Activated CD8-positive, alpha-beta T cell treated with anti-CD3 and anti-CD28 coated beads, Interleukin-2, amount 10 ng/mL, durations not matched to agents 7 days and 5 days (primary cell): ENCODE measurements at regions of chr22 and their contacts with region 1.

Region 1: DNA sequence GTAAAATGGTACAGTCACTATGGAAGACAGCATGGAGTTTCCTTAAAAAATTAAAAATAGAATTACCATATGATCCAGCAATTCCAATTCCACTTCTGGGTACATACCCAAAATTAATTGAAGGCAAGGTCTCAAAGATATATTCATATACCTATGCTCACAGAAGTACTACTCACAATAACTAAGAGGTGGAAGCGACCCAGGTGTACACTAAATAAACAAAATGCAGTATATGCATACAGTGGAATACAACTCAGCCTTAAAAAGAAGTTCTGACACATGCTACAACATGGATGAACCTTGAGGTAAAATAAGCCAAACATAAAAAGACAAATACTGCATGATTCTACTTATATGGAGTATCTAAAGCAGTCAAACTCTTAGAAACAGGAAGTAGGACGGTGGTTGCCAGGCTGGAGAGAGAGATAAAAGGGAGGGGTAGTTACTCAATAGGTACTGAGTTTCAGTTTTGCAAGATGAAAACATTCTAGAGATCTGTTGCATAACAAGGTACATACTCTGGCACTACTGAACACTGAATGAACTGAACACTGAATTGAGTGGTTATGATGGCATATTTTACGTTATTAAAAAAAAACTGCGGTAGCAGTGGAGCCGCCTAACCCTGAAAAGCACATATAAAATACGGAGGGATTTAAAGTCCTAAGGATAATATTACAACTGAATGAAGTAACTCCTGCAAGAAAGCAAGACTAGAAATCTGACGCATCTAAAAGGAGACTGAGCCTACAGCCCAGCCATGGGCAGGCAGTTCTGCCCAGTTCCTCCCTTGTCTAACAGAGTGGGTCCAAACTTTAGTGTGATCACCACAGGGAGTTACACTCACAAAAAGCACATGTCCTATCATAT is 12.8 kb downstream of the DGCR2 start:
- DNase-seq: peak; percentile 78
- ATAC-seq: peak; percentile 90
- H3K4me3 Mint-ChIP-seq: peak overlapping the region; percentile 72
- H3K27ac Mint-ChIP-seq: peak overlapping the region; percentile 88
- H3K4me1 Mint-ChIP-seq: peaks cover 57% of the 10 kb centered on the region
- H3K27me3 Mint-ChIP-seq: no peaks in the 10 kb centered on the region

Region 2: DNA sequence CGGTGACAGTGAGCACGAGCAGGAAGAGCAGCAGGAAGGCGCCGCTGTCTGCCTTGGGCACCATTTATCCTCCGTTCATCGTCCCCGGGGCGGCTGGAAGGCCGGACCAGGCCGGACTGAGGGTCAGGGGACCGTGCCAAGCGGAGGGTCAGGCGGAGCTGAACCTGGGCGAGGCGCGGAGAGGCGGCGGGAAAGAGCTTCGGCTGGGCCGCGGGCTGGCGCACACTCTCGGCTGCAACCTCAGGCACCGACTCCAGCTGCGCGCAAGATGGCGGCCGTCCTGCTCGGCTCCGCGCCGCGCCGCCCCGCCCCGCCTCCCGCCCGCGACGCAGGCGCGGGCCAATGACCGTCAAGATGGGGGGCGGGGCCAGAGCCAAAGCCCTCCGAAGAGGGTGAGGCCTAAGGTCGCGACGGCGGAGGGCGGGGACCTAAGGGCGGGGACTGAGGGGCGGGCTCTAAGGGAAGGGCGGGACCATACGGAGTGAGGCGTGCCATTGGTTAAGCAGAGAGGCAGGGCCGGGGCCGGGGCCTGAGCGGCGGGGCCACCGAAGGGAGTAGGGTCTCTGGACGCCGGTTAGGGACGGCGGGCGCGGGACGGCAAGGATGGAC is 12.8 kb after region 1 on chr22 and contains the start of gene DGCR2:
- CTCF ChIA-PET with region 1: interaction called, 11 read pairs
- POLR2A ChIA-PET with region 1: interaction called, 16 read pairs
- DNase-seq: peak; percentile 96
- ATAC-seq: peak; percentile 96
- H3K4me3 Mint-ChIP-seq: peak within 1 kb of the TSS; percentile 89
- H3K27ac Mint-ChIP-seq: peak within 1 kb of the TSS; percentile 78
- H3K4me1 Mint-ChIP-seq: peaks cover 45% of the 10 kb centered on the region
- H3K27me3 Mint-ChIP-seq: no peaks in the 10 kb centered on the region
- total RNA-seq, gene DGCR2: 30.5 to 34.2 TPM

Region 3: DNA sequence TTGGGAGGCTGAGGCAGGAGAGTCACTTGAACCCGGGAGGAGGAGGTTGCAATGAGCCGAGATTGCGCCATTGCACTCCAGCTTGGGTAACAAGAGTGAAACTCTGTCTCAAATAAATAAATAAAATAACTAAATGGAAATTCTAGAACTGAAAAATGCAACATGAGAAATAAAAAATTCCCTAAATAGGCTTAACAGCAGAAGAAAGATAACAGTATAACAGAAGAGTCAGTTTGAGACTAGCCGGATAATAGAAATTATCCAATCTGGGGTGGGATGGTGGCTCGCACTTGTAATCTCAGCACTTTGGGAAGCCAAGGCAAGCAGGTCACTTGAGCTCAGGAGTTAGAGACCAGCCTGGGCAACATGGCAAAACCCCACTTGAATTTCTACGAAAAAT is 55.0 kb after region 1 on chr22:
- CTCF ChIA-PET with region 1: no interaction called
- POLR2A ChIA-PET with region 1: no interaction called
- DNase-seq: no peak
- ATAC-seq: no peak
- H3K4me3 Mint-ChIP-seq: no peak overlapping the region
- H3K27ac Mint-ChIP-seq: no peak overlapping the region
- H3K4me1 Mint-ChIP-seq: peaks cover 4% of the 10 kb centered on the region
- H3K27me3 Mint-ChIP-seq: peaks cover 24% of the 10 kb centered on the region